Activated CD4-positive, alpha-beta memory T cell treated with anti-CD3 and anti-CD28 coated beads for 36 hours (primary cell): ENCODE measurements at regions of chr2 and their contacts with region 1.

Region 1: GRCh38 chr2:171136024-171136423 is 24.7 kb downstream of the TLK1 start:
- DNase-seq: peak; percentile 55
- H3K4me3 Mint-ChIP-seq: peak overlapping the region; percentile 27
- H3K27ac Mint-ChIP-seq: peak overlapping the region; percentile 78
- H3K4me1 Mint-ChIP-seq: peaks cover 69% of the 10 kb centered on the region
- H3K27me3 Mint-ChIP-seq: no peaks in the 10 kb centered on the region

Region 2: DNA sequence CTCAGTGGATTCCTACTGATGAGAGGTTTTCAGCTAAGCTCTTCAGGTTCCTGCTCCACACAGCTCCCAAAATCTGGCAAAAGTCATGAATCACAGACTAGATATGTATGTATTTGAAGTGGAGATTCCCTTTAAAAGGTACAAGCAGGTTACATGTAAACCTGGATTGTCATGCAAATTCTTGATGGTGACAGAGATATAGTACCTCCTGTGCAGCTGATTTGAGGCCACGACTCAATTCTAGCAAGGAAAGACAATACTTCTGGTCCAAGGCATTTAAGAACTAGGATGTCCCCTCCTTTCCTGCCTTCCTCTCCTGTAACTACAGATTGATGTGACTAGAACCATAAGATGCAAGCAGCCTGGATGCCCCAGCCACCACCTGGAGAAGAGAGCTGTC is 151.9 kb before region 1 on chr2:
- CTCF ChIA-PET with region 1: no interaction called
- POLR2A ChIA-PET with region 1: no interaction called
- intact Hi-C with region 1: no loop called
- DNase-seq: no peak
- H3K4me3 Mint-ChIP-seq: no peak overlapping the region
- H3K27ac Mint-ChIP-seq: no peak overlapping the region
- H3K4me1 Mint-ChIP-seq: no peaks in the 10 kb centered on the region
- H3K27me3 Mint-ChIP-seq: no peaks in the 10 kb centered on the region

Region 3: GRCh38 chr2:171095014-171095582 is 40.9 kb before region 1 on chr2:
- CTCF ChIA-PET with region 1: interaction called, 3 read pairs
- POLR2A ChIA-PET with region 1: interaction called, 3 read pairs
- intact Hi-C with region 1: loop called (anchors 1 kb)
- DNase-seq: no peak
- H3K4me3 Mint-ChIP-seq: no peak overlapping the region
- H3K27ac Mint-ChIP-seq: peak overlapping the region; percentile 24
- H3K4me1 Mint-ChIP-seq: peaks cover 37% of the 10 kb centered on the region
- H3K27me3 Mint-ChIP-seq: no peaks in the 10 kb centered on the region

Region 4: DNA sequence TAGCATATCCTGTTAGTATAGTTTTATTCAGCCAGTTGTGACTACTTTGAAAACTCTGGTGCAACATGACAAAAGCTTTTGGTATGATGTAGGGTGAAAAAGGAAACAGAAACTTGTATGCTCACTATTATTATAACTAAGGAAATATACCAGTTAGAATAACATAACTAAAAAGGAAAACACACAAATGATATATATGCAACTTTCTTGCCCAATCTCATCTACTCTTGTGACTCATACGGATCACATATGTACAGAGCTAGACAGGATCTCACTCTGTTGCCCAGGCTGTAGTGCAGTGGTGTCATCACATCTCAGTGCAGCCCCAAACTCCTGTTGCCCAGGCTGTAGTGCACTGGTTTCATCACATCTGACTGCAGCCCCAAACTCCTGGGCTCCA is 37.1 kb after region 1 on chr2:
- CTCF ChIA-PET with region 1: no interaction called
- POLR2A ChIA-PET with region 1: no interaction called
- intact Hi-C with region 1: loop called (anchors 1 kb)
- DNase-seq: peak; percentile 53
- H3K4me3 Mint-ChIP-seq: no peak overlapping the region
- H3K27ac Mint-ChIP-seq: no peak overlapping the region
- H3K4me1 Mint-ChIP-seq: peaks cover 17% of the 10 kb centered on the region
- H3K27me3 Mint-ChIP-seq: no peaks in the 10 kb centered on the region